IMR-90 (cell line): ENCODE measurements at regions of chr2 and their contacts with region 1.

Region 1: DNA sequence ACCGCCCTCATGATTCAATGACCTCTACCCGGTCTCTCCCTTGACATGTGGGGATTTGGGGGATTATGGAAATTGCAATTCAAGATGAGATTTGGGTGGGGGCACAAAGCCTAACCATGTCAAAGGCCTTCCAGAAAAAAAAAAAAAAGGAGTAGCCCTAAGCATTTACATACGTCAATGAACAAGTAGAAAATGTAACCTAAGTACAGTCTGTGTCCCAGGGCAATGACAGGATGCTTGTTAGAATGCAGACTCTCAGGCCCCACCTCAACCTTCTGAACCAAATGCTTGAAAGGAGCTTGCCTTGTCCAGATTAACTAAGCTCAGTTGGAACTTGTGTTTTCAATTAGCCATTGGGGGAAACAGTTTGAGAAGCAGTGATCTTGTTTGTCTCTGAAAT is 802.1 kb downstream of the CPS1 start:
- DNase-seq: no peak
- ATAC-seq: no peak
- H3K4me3 ChIP-seq: no peak overlapping the region
- H3K27ac ChIP-seq: no peak overlapping the region
- H3K4me1 ChIP-seq: no peaks in the 10 kb centered on the region
- H3K27me3 ChIP-seq: no peaks in the 10 kb centered on the region
- CTCF ChIP-seq: no peak
- POLR2A ChIP-seq: no peak
- RAD21 ChIP-seq: no peak

Region 2: DNA sequence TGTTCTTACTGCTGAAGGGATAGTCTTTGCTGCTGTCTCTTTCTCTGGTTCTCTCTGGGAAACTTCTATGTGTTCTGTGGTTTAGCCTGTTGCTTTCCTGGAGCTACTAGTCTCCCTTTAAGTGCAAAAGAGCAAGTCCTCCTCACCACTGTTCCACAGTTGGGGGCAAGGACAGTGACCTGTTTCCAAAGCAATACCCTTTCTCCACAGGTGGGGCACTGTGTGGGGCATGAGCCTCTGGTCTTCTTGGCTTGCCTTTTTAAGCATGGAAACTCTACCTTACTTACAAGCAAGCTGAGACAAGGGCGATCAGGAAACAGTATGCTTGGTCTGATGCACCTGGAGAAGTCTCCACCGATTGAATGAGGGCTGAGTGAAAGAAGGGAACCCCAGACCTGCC is 645.4 kb before region 1 on chr2:
- CTCF ChIA-PET with region 1: no interaction called
- POLR2A ChIA-PET with region 1: no interaction called
- dilution Hi-C with region 1: no loop called
- in situ Hi-C with region 1: no loop called
- intact Hi-C with region 1: no loop called
- DNase-seq: no peak
- ATAC-seq: no peak
- H3K4me3 ChIP-seq: no peak overlapping the region
- H3K27ac ChIP-seq: no peak overlapping the region
- H3K4me1 ChIP-seq: no peaks in the 10 kb centered on the region
- H3K27me3 ChIP-seq: no peaks in the 10 kb centered on the region
- CTCF ChIP-seq: no peak
- POLR2A ChIP-seq: no peak
- RAD21 ChIP-seq: no peak

Region 3: DNA sequence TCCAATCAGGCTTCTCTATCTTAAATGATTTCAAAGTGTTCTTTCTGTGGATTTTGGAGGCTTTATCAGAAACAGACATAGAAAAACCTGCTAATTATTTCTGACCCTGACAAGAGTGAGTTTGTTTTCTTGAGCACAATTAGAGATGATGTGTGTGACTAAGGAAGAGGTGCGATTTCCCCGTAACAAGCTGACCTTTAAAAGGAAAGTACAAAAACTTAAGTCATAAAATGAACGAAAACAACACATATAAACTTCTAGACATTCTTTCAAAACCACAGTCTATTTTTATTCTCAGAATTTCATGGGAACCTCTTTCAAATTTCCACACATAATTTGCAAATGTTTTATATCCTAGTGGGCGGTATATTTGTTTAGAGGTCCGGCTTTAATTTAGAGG is 197.3 kb before region 1 on chr2:
- CTCF ChIA-PET with region 1: no interaction called
- POLR2A ChIA-PET with region 1: no interaction called
- dilution Hi-C with region 1: no loop called
- in situ Hi-C with region 1: no loop called
- intact Hi-C with region 1: no loop called
- DNase-seq: no peak
- ATAC-seq: no peak
- H3K4me3 ChIP-seq: no peak overlapping the region
- H3K27ac ChIP-seq: no peak overlapping the region
- H3K4me1 ChIP-seq: no peaks in the 10 kb centered on the region
- H3K27me3 ChIP-seq: no peaks in the 10 kb centered on the region
- CTCF ChIP-seq: no peak
- POLR2A ChIP-seq: no peak
- RAD21 ChIP-seq: no peak

Region 4: GRCh38 chr2:211248847-211249246 is 109.7 kb before region 1 on chr2:
- CTCF ChIA-PET with region 1: no interaction called
- POLR2A ChIA-PET with region 1: no interaction called
- dilution Hi-C with region 1: no loop called
- in situ Hi-C with region 1: no loop called
- intact Hi-C with region 1: no loop called
- DNase-seq: no peak
- ATAC-seq: no peak
- H3K4me3 ChIP-seq: no peak overlapping the region
- H3K27ac ChIP-seq: no peak overlapping the region
- H3K4me1 ChIP-seq: no peaks in the 10 kb centered on the region
- H3K27me3 ChIP-seq: no peaks in the 10 kb centered on the region
- CTCF ChIP-seq: no peak
- POLR2A ChIP-seq: no peak
- RAD21 ChIP-seq: no peak

Region 5: DNA sequence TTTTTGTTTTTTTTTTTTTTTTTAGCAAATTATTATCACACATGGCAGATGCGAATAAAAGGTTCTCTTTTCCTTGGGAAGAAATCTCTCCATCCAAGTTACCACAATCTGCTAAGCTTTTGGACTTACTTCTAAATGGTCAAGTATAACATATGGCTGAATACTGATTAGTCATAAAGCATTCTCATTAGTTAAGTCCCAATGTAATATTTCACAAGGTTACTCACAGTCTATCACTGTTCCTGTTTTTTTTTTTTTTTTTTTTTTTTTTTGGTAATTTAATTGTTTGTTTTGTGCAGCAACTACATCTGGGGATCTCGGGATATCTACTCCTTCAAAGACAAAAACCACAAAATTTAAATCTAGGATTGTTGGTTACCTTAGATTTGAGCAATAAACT is 30.4 kb before region 1 on chr2:
- CTCF ChIA-PET with region 1: no interaction called
- POLR2A ChIA-PET with region 1: no interaction called
- dilution Hi-C with region 1: no loop called
- in situ Hi-C with region 1: no loop called
- intact Hi-C with region 1: loop called (anchors 1 kb)
- DNase-seq: no peak
- ATAC-seq: no peak
- H3K4me3 ChIP-seq: no peak overlapping the region
- H3K27ac ChIP-seq: no peak overlapping the region
- H3K4me1 ChIP-seq: no peaks in the 10 kb centered on the region
- H3K27me3 ChIP-seq: no peaks in the 10 kb centered on the region
- CTCF ChIP-seq: no peak
- POLR2A ChIP-seq: no peak
- RAD21 ChIP-seq: no peak